Activated naive CD4-positive, alpha-beta T cell treated with anti-CD3 and anti-CD28 coated beads, Interleukin-2, amount 10 ng/mL, durations not matched to agents 7 days and 5 days (primary cell): ENCODE measurements at regions of chr5 and their contacts with region 1.

Region 1: GRCh38 chr5:139863855-139864558 is 68.4 kb downstream of the PSD2 start:
- DNase-seq: peak; percentile 68
- H3K4me3 Mint-ChIP-seq: no peak overlapping the region
- H3K27ac Mint-ChIP-seq: no peak overlapping the region
- H3K4me1 Mint-ChIP-seq: no peaks in the 10 kb centered on the region
- H3K27me3 Mint-ChIP-seq: peaks cover 49% of the 10 kb centered on the region

Region 2: GRCh38 chr5:139611703-139612584 is 252.1 kb before region 1 on chr5:
- CTCF ChIA-PET with region 1: no interaction called
- DNase-seq: no peak
- H3K4me3 Mint-ChIP-seq: no peak overlapping the region
- H3K27ac Mint-ChIP-seq: no peak overlapping the region
- H3K4me1 Mint-ChIP-seq: peaks cover 10% of the 10 kb centered on the region
- H3K27me3 Mint-ChIP-seq: no peaks in the 10 kb centered on the region

Region 3: GRCh38 chr5:139844472-139845145 is 19.4 kb before region 1 on chr5:
- CTCF ChIA-PET with region 1: interaction called, 12 read pairs
- DNase-seq: peak; percentile 80
- H3K4me3 Mint-ChIP-seq: no peak overlapping the region
- H3K27ac Mint-ChIP-seq: no peak overlapping the region
- H3K4me1 Mint-ChIP-seq: peaks cover 6% of the 10 kb centered on the region
- H3K27me3 Mint-ChIP-seq: peaks cover 64% of the 10 kb centered on the region

Region 4: DNA sequence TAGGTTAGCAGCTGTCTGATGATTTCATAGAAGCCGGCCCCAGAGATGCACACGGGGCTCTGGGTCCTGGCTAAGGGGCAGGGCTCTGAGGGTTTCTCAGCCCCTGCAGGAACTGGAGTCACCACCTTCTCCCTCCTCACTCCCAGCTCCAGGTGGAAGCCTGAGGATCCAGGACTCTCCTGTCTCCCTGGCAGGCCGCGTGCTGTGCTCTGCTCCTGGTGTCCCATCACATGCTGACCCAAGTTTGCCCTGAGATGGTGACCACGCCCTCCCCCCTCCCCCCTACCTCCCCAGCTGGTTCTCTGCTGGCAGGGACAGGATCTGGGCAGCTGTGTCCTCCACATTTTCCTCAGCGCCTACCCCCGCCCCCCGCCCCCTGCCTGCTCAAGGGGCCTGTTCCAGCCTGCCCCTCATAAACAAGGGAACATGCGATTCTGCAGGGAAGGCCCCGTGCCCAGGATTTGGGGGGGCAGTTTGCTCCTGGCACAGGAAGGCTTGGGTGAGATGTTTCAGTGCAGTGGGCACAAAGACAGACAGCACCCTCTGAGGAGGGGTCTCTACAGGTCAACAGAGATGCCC is 19.0 kb after region 1 on chr5:
- CTCF ChIA-PET with region 1: no interaction called
- DNase-seq: no peak
- H3K4me3 Mint-ChIP-seq: no peak overlapping the region
- H3K27ac Mint-ChIP-seq: no peak overlapping the region
- H3K4me1 Mint-ChIP-seq: no peaks in the 10 kb centered on the region
- H3K27me3 Mint-ChIP-seq: peaks cover 21% of the 10 kb centered on the region